GM18951 (cell line): ENCODE measurements at regions of chr22 and their contacts with region 1.

Region 1: DNA sequence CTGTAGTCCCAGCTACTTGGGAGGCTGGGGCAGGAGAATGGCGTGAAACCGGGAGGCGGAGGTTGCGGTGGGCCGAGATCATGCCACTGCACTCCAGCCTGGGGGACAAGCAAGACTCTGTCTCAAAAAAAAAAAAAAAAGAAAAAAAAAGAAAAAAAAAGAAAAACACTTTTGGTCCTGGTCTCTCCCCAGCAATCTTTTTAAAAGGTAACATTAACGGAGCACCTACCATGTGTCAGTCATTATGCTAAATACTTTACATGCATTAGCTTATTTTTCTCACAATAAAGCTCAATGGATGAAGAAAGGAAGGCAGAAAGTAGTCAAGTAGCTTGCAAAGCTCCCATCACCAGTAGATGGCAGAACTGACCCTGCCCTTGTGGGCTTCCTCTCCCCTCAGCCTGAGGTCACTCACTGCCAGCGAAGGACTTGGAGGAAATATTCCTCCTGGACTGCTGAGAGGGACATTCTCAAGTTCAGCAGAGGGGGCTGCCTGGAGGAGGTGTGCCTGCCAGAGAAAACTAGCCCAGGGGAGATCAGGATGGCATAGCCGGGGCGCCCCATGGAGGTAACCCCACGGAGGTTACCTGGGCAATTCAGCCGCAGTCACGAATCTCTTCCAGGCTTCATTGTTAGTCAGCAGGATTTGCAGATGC is 15.5 kb downstream of the APOL3 start:
- POLR2A ChIP-seq: no peak

Region 2: DNA sequence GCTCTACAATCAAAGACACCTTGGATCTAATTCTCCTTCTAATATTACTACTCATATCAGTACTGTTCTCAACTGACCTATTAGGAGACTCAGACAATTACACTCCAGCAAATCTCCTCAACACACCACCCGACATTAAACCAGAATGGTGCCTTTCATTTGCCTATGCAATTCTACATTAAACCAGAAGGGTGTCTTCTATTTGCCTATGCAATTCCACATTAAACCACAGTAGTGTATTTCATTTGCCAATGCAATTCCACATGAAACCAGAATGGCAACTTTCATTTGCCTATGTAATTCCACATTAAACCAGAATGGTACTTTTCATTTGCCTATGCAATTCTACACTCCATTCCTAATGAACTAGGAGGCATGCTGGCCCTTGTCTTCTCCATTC is 30.9 kb after region 1 on chr22:
- in situ Hi-C with region 1: loop called (anchors 5 kb)
- POLR2A ChIP-seq: no peak